MCF 10A (cell line): ENCODE measurements at regions of chr9 and their contacts with region 1.

Region 1: DNA sequence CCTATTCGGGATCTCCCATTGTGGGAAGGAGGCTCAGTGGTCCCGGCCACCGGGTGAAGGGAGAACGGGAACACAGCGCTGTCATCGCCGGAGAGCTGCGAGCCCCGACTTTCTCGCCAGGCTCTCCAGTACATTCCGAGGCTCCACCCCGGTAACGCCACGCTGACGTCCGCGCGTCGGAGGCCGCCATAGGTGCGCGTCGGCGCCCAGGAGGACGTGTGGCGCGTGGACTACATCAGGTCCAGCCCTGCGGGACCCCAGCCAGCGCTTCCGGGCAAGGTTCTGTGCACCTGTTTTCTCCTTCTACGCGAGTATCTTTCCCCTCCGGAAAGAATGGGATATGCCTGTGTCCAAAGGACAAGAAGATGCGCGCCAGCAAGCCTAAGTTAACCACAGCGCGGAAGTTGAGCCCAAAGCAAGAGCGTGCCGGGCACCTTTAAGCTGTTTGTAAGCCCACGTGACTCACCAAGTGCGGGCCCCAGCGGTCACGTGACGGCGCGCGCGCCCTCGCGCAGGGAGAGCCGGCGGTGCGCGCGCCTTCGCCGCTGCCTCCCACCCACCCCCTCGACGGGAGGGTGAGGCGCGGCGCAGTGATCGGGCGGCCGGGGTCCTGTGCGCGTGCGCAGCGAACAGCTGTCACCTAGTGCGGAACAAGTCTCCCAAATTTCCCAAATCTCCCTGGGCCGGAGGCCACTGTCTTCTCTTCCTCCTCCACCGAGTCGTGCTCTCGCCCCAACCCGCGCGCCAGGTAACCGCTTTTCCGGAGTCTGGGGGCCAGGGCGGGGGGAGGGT is at the start of gene KDM4C:
- DNase-seq: peak; percentile 95
- H3K4me3 Mint-ChIP-seq: peak within 1 kb of the TSS; percentile 90
- H3K27ac Mint-ChIP-seq: peak within 1 kb of the TSS; percentile 100
- H3K4me1 Mint-ChIP-seq: peaks cover 3% of the 10 kb centered on the region
- H3K27me3 Mint-ChIP-seq: no peaks in the 10 kb centered on the region
- CTCF ChIP-seq: no peak
- total RNA-seq, gene KDM4C: 28.6 and 29.5 TPM in 2 replicates

Region 2: GRCh38 chr9:6566409-6567139 is 191.1 kb before region 1 on chr9:
- CTCF ChIA-PET with region 1: no interaction called
- POLR2A ChIA-PET with region 1: interaction called, 12 read pairs
- intact Hi-C with region 1: no loop called
- DNase-seq: peak; percentile 98
- H3K4me3 Mint-ChIP-seq: peak overlapping the region; percentile 64
- H3K27ac Mint-ChIP-seq: peak overlapping the region; percentile 64
- H3K4me1 Mint-ChIP-seq: peaks cover 19% of the 10 kb centered on the region
- H3K27me3 Mint-ChIP-seq: no peaks in the 10 kb centered on the region
- CTCF ChIP-seq: no peak

Region 3: GRCh38 chr9:6681147-6681956 is 76.3 kb before region 1 on chr9:
- CTCF ChIA-PET with region 1: interaction called, 3 read pairs
- POLR2A ChIA-PET with region 1: interaction called, 48 read pairs
- intact Hi-C with region 1: loop called (anchors 2 kb)
- DNase-seq: peak; percentile 97
- H3K4me3 Mint-ChIP-seq: peak overlapping the region; percentile 92
- H3K27ac Mint-ChIP-seq: peak overlapping the region; percentile 98
- H3K4me1 Mint-ChIP-seq: peaks cover 15% of the 10 kb centered on the region
- H3K27me3 Mint-ChIP-seq: no peaks in the 10 kb centered on the region
- CTCF ChIP-seq: no peak

Region 4: GRCh38 chr9:6787793-6788161 is 30.1 kb after region 1 on chr9:
- CTCF ChIA-PET with region 1: no interaction called
- POLR2A ChIA-PET with region 1: interaction called, 19 read pairs
- intact Hi-C with region 1: no loop called
- DNase-seq: no peak
- H3K4me3 Mint-ChIP-seq: peak overlapping the region; percentile 40
- H3K27ac Mint-ChIP-seq: peak overlapping the region; percentile 63
- H3K4me1 Mint-ChIP-seq: peaks cover 24% of the 10 kb centered on the region
- H3K27me3 Mint-ChIP-seq: no peaks in the 10 kb centered on the region
- CTCF ChIP-seq: no peak

Region 5: GRCh38 chr9:6811436-6811835 is 53.8 kb after region 1 on chr9:
- CTCF ChIA-PET with region 1: no interaction called
- POLR2A ChIA-PET with region 1: no interaction called
- intact Hi-C with region 1: no loop called
- DNase-seq: no peak
- H3K4me3 Mint-ChIP-seq: no peak overlapping the region
- H3K27ac Mint-ChIP-seq: no peak overlapping the region
- H3K4me1 Mint-ChIP-seq: no peaks in the 10 kb centered on the region
- H3K27me3 Mint-ChIP-seq: no peaks in the 10 kb centered on the region
- CTCF ChIP-seq: no peak

Region 6: GRCh38 chr9:6833518-6834192 is 76.0 kb after region 1 on chr9:
- CTCF ChIA-PET with region 1: no interaction called
- POLR2A ChIA-PET with region 1: no interaction called
- intact Hi-C with region 1: no loop called
- DNase-seq: no peak
- H3K4me3 Mint-ChIP-seq: no peak overlapping the region
- H3K27ac Mint-ChIP-seq: no peak overlapping the region
- H3K4me1 Mint-ChIP-seq: no peaks in the 10 kb centered on the region
- H3K27me3 Mint-ChIP-seq: no peaks in the 10 kb centered on the region
- CTCF ChIP-seq: no peak

Region 7: GRCh38 chr9:6997330-6997729 is 239.7 kb after region 1 on chr9:
- CTCF ChIA-PET with region 1: no interaction called
- POLR2A ChIA-PET with region 1: no interaction called
- intact Hi-C with region 1: no loop called
- DNase-seq: peak; percentile 31
- H3K4me3 Mint-ChIP-seq: no peak overlapping the region
- H3K27ac Mint-ChIP-seq: no peak overlapping the region
- H3K4me1 Mint-ChIP-seq: peaks cover 12% of the 10 kb centered on the region
- H3K27me3 Mint-ChIP-seq: no peaks in the 10 kb centered on the region
- CTCF ChIP-seq: no peak